ENCODE measurements at regions of chr1 and their contacts with region 1.

Region 1: GRCh38 chr1:246270236-246270635 is 236.8 kb downstream of the SMYD3 start:
- DNase-seq: no peak
- H3K4me3 ChIP-seq: no peak overlapping the region
- H3K27ac ChIP-seq: no peak overlapping the region
- H3K4me1 ChIP-seq: no peaks in the 10 kb centered on the region
- H3K27me3 ChIP-seq: no peaks in the 10 kb centered on the region
- CTCF ChIP-seq: no peak
- POLR2A ChIP-seq: no peak

Region 2: DNA sequence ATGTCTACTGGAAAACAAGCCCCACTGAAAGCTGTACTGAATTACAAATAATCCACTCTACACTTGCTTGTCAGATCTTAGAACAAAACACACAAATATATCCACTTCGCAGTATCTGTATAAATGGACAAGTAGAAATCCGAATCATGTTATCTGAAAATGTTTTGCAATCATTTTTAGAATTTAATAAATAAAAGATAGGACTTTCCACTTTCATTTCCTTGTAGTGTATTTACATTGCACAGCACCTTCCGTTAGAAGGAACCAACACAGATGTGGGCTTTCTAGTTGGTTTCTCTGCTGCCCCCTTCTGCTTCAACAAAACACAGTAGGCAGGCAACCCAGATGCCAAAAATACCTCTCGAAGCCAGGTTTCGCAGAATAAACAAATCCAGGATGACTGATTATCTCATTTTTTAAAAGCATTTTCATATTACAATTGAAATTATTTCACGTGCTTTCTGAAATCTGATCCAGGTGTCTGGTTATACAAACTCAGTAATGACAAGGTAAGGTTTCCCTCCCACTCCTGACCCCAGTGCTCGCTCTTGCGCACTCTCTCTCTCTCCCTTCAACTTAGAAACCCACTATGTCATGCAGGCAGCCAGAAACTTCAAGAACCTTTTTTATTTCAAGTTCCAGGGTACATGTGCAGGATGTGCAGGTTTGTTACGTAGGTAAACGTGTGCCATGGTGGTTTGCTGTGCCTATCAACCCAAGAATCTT is 153.0 kb before region 1 on chr1:
- intact Hi-C with region 1: no loop called
- DNase-seq: no peak
- H3K4me3 ChIP-seq: no peak overlapping the region
- H3K27ac ChIP-seq: no peak overlapping the region
- H3K4me1 ChIP-seq: no peaks in the 10 kb centered on the region
- H3K27me3 ChIP-seq: no peaks in the 10 kb centered on the region
- CTCF ChIP-seq: peak in 2 of 3 donors; percentile 13 to 48
- POLR2A ChIP-seq: no peak

Region 3: DNA sequence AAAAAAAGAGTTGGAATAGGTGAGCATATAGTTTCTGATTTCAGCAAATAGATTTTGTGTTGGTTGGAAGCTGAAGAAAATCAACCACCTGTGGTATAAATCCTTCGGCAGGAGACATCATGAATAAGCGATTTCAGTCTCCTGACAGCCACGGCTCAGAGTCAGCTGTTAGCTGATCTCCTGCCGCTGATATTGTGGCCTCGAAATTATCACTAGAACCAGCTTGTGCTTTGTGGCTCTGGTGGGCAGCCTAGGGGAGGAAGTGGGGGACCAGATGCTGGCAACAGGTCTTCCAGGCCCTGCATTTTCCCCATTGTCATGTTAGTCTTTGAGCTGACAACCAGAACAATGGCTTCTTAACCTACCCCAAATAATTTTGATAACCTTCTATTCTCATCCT is 1277.9 kb after region 1 on chr1:
- intact Hi-C with region 1: loop called (anchors 10 kb)
- DNase-seq: no peak
- H3K4me3 ChIP-seq: no peak overlapping the region
- H3K27ac ChIP-seq: no peak overlapping the region
- H3K4me1 ChIP-seq: no peaks in the 10 kb centered on the region
- H3K27me3 ChIP-seq: no peaks in the 10 kb centered on the region
- CTCF ChIP-seq: no peak
- POLR2A ChIP-seq: no peak

Measured in breast epithelium (tissue), 4 donors.